ENCODE measurements at regions of chr14 and their contacts with region 1.

Region 1: DNA sequence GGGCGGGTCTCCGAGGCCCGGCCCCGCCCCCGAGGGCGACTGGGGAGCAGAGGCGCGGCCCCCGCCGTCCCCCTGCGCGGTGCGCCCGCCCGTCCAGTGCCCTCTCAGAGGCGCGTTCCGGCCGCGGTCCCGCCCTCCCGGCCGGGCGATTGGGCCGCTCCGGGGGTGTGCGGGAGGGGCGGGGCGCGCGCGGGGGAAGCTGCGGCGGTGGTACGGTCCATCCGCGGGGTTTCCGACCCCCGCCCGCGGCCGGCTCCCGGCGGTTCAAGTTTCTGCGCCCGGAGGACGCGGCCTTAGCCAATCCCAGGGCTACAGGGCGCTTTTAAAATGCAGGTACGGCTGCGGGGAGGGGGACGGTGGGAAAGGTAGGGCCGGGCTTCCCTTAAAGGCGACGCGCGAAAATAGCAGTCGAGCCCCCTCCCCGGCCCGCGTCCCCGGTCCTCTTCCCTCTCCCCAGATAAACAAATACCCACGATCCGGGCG is 317 bp upstream of the CCDC85C start:
- DNase-seq: peak; percentile 96
- ATAC-seq: peak; percentile 94
- H3K4me3 Mint-ChIP-seq: peak overlapping the region; percentile 72
- H3K27ac Mint-ChIP-seq: peak overlapping the region; percentile 72
- H3K4me1 Mint-ChIP-seq: peaks cover 28% of the 10 kb centered on the region
- H3K27me3 Mint-ChIP-seq: peaks cover 2% of the 10 kb centered on the region

Region 2: GRCh38 chr14:99480917-99481744 is 123.2 kb before region 1 on chr14 and contains the start of gene CCNK:
- CTCF ChIA-PET with region 1: no interaction called
- POLR2A ChIA-PET with region 1: no interaction called
- intact Hi-C with region 1: loop called in 1 of 2 experiments (anchors 1 kb)
- DNase-seq: peak; percentile 100
- ATAC-seq: peak; percentile 95
- H3K4me3 Mint-ChIP-seq: peak within 1 kb of the TSS; percentile 97
- H3K27ac Mint-ChIP-seq: peak within 1 kb of the TSS; percentile 96
- H3K4me1 Mint-ChIP-seq: peaks cover 58% of the 10 kb centered on the region
- H3K27me3 Mint-ChIP-seq: no peaks in the 10 kb centered on the region
- total RNA-seq, gene CCNK: 93.7 to 96.2 TPM

Region 3: DNA sequence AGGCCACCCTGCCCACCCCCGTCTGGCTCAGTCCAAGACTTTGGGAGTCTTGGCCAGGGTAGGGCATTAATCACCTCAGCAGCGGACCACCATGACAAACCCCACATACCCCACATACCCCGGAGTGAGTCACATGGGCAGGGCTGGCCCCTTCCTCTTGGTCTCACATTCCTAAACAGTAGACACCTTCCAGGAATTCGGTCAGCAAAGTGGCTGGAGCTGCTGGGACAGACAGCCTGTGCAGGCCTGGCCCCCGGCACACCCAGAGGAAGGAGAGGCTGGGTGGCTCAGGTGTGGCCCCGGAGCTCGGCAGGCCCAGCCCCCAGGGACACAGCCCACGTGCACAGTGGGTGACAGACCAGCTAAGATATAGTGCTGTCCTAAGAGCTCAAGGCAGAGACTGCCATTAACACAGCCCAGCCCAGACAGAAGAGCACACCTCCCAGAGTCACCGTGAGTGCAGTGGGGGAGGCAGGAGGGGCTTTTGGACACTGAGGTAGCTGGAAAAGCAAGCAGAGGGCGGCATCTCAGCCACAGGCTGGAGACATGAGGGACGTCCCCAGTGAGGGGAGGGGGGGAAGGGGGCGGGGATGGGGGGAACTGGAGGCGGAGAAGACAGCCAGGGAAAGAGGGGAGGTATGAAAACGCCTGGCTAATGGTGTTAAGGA is 24.3 kb before region 1 on chr14:
- CTCF ChIA-PET with region 1: no interaction called
- POLR2A ChIA-PET with region 1: no interaction called
- intact Hi-C with region 1: no loop called
- DNase-seq: no peak
- ATAC-seq: no peak
- H3K4me3 Mint-ChIP-seq: no peak overlapping the region
- H3K27ac Mint-ChIP-seq: no peak overlapping the region
- H3K4me1 Mint-ChIP-seq: no peaks in the 10 kb centered on the region
- H3K27me3 Mint-ChIP-seq: no peaks in the 10 kb centered on the region

Region 4: GRCh38 chr14:99636487-99636886 is 32.2 kb after region 1 on chr14:
- CTCF ChIA-PET with region 1: no interaction called
- POLR2A ChIA-PET with region 1: no interaction called
- intact Hi-C with region 1: no loop called
- DNase-seq: no peak
- ATAC-seq: no peak
- H3K4me3 Mint-ChIP-seq: no peak overlapping the region
- H3K27ac Mint-ChIP-seq: no peak overlapping the region
- H3K4me1 Mint-ChIP-seq: no peaks in the 10 kb centered on the region
- H3K27me3 Mint-ChIP-seq: peaks cover 2% of the 10 kb centered on the region

Measured in activated CD4-positive, alpha-beta T cell treated with anti-CD3 and anti-CD28 coated beads for 36 hours (primary cell).